Mammary epithelial cell (primary cell): ENCODE measurements at regions of chr10 and their contacts with region 1.

Region 1: GRCh38 chr10:24255881-24256311 is 47.0 kb downstream of the KIAA1217 start:
- DNase-seq: peak; percentile 96
- H3K4me3 ChIP-seq: peak overlapping the region; percentile 64 to 68 (median 65)
- H3K27ac ChIP-seq: peak overlapping the region; percentile 96
- H3K4me1 ChIP-seq: peaks cover 51% of the 10 kb centered on the region
- H3K27me3 ChIP-seq: no peaks in the 10 kb centered on the region
- CTCF ChIP-seq: no peak

Region 2: DNA sequence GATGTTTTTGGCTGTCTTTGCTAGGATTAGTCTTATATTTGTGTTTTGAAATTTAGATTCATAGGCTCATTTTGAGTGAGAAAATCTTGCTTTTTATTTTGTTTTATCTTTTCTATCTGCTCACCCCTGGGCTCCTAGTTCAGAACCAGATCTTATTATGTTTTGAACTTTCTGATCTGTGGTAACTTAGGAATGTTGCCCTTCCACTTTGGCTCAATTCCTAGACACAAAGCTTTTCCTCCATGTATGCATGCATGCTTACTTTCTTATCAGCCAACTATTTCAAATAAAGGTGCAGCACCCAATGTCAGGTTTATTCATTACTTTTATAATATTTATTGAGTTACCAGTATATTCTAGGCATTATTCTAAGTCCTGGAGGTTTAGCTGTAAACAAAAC is 421.8 kb before region 1 on chr10:
- CTCF ChIA-PET with region 1: no interaction called
- dilution Hi-C with region 1: no loop called
- in situ Hi-C with region 1: no loop called
- intact Hi-C with region 1: no loop called
- DNase-seq: no peak
- H3K4me3 ChIP-seq: no peak overlapping the region
- H3K27ac ChIP-seq: no peak overlapping the region
- H3K4me1 ChIP-seq: no peaks in the 10 kb centered on the region
- H3K27me3 ChIP-seq: no peaks in the 10 kb centered on the region
- CTCF ChIP-seq: no peak

Region 3: DNA sequence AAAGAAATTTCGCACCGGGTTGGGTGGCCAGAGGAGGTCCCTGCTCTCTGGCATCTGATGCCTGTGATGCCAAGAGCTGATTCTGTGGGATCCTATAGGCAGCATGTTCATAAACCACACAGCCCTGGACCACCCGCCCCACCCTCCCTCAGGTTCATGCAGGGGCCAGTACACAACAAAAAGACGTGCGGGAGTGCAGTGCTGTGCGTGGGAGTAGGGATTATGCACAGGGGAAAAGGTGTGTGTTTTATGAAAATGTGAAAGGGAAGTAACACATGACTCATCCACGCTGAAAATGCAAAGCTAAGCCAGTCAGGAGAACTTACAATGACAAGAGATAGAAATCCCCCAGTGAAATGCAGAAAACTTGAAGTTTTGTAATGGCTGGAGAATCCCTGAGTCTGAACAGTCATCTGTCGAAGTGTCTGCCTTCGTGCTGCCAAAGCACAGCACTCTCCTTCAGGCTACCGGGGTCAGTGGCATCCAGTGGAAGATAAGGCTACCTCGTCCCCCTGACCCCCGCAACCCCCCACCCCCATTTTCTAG is 45.9 kb before region 1 on chr10:
- CTCF ChIA-PET with region 1: no interaction called
- dilution Hi-C with region 1: loop called (anchors 5 kb)
- in situ Hi-C with region 1: no loop called
- intact Hi-C with region 1: loop called (anchors 1 kb)
- DNase-seq: peak; percentile 91
- H3K4me3 ChIP-seq: peak overlapping the region; percentile 25 to 53 (median 42)
- H3K27ac ChIP-seq: peak overlapping the region; percentile 70
- H3K4me1 ChIP-seq: peaks cover 15% of the 10 kb centered on the region
- H3K27me3 ChIP-seq: no peaks in the 10 kb centered on the region
- CTCF ChIP-seq: no peak

Region 4: DNA sequence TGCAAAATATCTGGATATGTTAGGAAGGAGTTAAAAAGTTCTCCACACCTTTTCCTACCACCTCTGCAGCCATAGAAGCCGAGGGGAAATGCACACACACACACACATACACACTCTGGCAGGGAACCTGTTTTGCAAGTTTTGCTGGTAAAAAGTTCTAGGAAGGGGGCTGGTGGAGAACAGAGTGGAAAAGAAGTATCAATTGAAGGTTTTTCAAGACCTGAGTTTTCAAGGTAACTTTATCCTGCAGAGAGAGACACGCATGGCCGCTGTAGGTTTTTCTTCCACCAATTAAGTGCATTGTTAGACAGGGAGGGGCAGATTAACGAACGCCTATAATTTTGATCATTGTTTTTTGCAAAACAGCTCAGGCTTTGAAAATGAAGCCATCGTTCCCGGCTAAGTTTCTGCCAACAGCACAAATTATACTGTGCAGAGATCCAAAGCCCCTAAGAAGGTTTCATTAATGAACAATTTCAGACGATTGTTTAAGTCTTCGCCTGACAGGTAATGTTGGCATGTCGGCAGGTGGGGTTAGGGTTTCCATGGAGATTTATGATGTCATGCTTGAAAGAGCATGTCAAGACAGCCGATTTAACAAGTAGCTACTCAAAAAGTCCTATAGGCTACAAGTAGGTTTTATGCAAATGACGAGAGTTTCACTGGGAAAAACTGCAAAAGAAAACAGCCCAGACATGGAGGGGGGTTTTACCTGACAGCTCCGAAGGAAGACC is 17.2 kb before region 1 on chr10:
- CTCF ChIA-PET with region 1: no interaction called
- dilution Hi-C with region 1: no loop called
- in situ Hi-C with region 1: no loop called
- intact Hi-C with region 1: loop called (anchors 2 kb)
- DNase-seq: peak; percentile 91
- H3K4me3 ChIP-seq: peak overlapping the region; percentile 53 to 60 (median 58)
- H3K27ac ChIP-seq: peak overlapping the region; percentile 87
- H3K4me1 ChIP-seq: peaks cover 30% of the 10 kb centered on the region
- H3K27me3 ChIP-seq: no peaks in the 10 kb centered on the region
- CTCF ChIP-seq: no peak

Region 5: DNA sequence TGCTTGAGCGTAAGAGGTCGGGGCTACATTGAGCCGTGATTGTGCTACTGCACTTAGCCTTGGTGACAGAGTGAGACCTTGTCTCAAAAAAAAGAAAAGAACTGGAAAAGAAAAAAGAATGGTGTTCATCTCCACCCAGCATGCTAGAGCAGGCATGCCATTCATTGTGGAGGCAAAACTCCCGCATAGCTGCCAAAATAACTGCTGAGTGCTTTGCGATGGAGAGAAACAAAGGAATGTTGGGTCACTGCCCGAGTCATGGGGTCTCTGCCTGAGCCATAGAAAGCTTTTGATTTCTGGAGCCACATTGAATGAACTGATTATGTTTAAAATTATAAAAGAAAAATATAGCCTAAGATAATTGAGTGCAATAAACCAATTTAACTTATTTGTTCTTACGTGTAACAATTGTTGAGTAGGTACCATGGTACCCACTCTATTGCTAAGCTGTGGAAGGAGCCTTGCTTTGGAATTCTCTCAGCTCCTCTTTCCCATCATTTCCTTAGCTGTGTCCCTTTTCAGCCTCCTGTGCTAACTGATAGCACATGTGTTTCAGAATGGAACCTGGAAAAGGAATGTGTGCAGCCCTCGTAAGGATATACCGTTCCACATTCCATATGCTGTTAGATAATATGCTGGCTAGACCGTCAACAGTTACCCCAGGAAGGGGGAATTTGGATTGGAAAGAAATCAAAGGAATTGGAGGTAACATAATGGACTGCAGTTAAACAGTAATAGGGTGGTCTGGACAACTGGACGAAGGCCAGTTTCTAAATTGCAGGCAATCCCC is 52.0 kb after region 1 on chr10:
- CTCF ChIA-PET with region 1: no interaction called
- dilution Hi-C with region 1: loop called (anchors 5 kb)
- in situ Hi-C with region 1: no loop called
- intact Hi-C with region 1: no loop called
- DNase-seq: no peak
- H3K4me3 ChIP-seq: no peak overlapping the region
- H3K27ac ChIP-seq: no peak overlapping the region
- H3K4me1 ChIP-seq: peaks cover 19% of the 10 kb centered on the region
- H3K27me3 ChIP-seq: no peaks in the 10 kb centered on the region
- CTCF ChIP-seq: no peak

Region 6: GRCh38 chr10:24331457-24331856 is 75.6 kb after region 1 on chr10:
- CTCF ChIA-PET with region 1: no interaction called
- dilution Hi-C with region 1: no loop called
- in situ Hi-C with region 1: no loop called
- intact Hi-C with region 1: loop called (anchors 5 kb)
- DNase-seq: peak; percentile 68
- H3K4me3 ChIP-seq: peak overlapping the region in 1 of 3 experiments; percentile 1
- H3K27ac ChIP-seq: peak overlapping the region; percentile 43
- H3K4me1 ChIP-seq: peaks cover 14% of the 10 kb centered on the region
- H3K27me3 ChIP-seq: no peaks in the 10 kb centered on the region
- CTCF ChIP-seq: no peak